ENCODE measurements at regions of chr7 and their contacts with region 1.

Region 1: GRCh38 chr7:119935418-119936025 is 337.5 kb upstream of the KCND2 start:
- DNase-seq: no peak
- H3K4me3 ChIP-seq: no peak overlapping the region
- H3K27me3 ChIP-seq: no peaks in the 10 kb centered on the region
- CTCF ChIP-seq: peak; percentile 31; the same call in 1 of the 2 replicates

Region 2: GRCh38 chr7:119802147-119802546 is 133.4 kb before region 1 on chr7:
- CTCF ChIA-PET with region 1: no interaction called
- POLR2A ChIA-PET with region 1: no interaction called
- DNase-seq: no peak
- H3K4me3 ChIP-seq: no peak overlapping the region
- H3K27me3 ChIP-seq: no peaks in the 10 kb centered on the region
- CTCF ChIP-seq: no peak

Region 3: GRCh38 chr7:120070201-120070600 is 134.7 kb after region 1 on chr7:
- CTCF ChIA-PET with region 1: interaction called, 15 read pairs
- POLR2A ChIA-PET with region 1: no interaction called
- DNase-seq: no peak
- H3K4me3 ChIP-seq: no peak overlapping the region
- H3K27me3 ChIP-seq: no peaks in the 10 kb centered on the region
- CTCF ChIP-seq: no peak

Region 4: GRCh38 chr7:120272261-120272660 is 336.7 kb after region 1 on chr7:
- CTCF ChIA-PET with region 1: interaction called, 10 read pairs
- POLR2A ChIA-PET with region 1: no interaction called
- DNase-seq: no peak
- H3K4me3 ChIP-seq: peak overlapping the region; percentile 30
- H3K27me3 ChIP-seq: peaks cover 7% of the 10 kb centered on the region
- CTCF ChIP-seq: peak; percentile 69